ENCODE measurements at regions of chr15 and their contacts with region 1.

Region 1: GRCh38 chr15:98581715-98582114 is 66.6 kb upstream of the IGF1R start:
- DNase-seq: peak in 6 of 9 donors; percentile 18 to 54 (median 40)
- ATAC-seq: peak; percentile 60
- H3K4me3 ChIP-seq: no peak overlapping the region
- H3K4me3 Mint-ChIP-seq: no peak overlapping the region
- H3K27ac ChIP-seq: no peak overlapping the region
- H3K27ac Mint-ChIP-seq: no peak overlapping the region
- H3K4me1 ChIP-seq: peaks cover 0 to 11% of the 10 kb centered on the region in 2 donors
- H3K4me1 Mint-ChIP-seq: peaks cover 4 to 18% (median 13%) of the 10 kb centered on the region in 7 donors
- H3K27me3 ChIP-seq: peaks cover 0 to 3% of the 10 kb centered on the region in 2 donors
- H3K27me3 Mint-ChIP-seq: peaks cover 22 to 58% (median 34%) of the 10 kb centered on the region in 5 donors

Region 2: GRCh38 chr15:98881526-98882520 is 300.1 kb after region 1 on chr15:
- CTCF ChIA-PET with region 1: no interaction called
- POLR2A ChIA-PET with region 1: no interaction called
- intact Hi-C with region 1: loop called in 1 of 2 experiments (anchors 1 kb)
- DNase-seq: peak in 6 of 9 donors; percentile 19 to 52 (median 38)
- ATAC-seq: peak; percentile 72
- H3K4me3 ChIP-seq: no peak overlapping the region
- H3K4me3 Mint-ChIP-seq: peak overlapping the region in 1 of 10 donors; percentile 39
- H3K27ac ChIP-seq: no peak overlapping the region
- H3K27ac Mint-ChIP-seq: peak overlapping the region in 3 of 9 donors; percentile 19 to 74 (median 65)
- H3K4me1 ChIP-seq: peaks cover 0 to 8% of the 10 kb centered on the region in 2 donors
- H3K4me1 Mint-ChIP-seq: peaks cover 6 to 73% (median 54%) of the 10 kb centered on the region in 7 donors
- H3K27me3 ChIP-seq: no peaks in the 10 kb centered on the region
- H3K27me3 Mint-ChIP-seq: no peaks in the 10 kb centered on the region

Measured in naive thymus-derived CD4-positive, alpha-beta T cell (primary cell).